Activated B cell treated with CpG ODN at 0.5 μM for 24 hours (primary cell): ENCODE measurements at regions of chr7 and their contacts with region 1.

Region 1: DNA sequence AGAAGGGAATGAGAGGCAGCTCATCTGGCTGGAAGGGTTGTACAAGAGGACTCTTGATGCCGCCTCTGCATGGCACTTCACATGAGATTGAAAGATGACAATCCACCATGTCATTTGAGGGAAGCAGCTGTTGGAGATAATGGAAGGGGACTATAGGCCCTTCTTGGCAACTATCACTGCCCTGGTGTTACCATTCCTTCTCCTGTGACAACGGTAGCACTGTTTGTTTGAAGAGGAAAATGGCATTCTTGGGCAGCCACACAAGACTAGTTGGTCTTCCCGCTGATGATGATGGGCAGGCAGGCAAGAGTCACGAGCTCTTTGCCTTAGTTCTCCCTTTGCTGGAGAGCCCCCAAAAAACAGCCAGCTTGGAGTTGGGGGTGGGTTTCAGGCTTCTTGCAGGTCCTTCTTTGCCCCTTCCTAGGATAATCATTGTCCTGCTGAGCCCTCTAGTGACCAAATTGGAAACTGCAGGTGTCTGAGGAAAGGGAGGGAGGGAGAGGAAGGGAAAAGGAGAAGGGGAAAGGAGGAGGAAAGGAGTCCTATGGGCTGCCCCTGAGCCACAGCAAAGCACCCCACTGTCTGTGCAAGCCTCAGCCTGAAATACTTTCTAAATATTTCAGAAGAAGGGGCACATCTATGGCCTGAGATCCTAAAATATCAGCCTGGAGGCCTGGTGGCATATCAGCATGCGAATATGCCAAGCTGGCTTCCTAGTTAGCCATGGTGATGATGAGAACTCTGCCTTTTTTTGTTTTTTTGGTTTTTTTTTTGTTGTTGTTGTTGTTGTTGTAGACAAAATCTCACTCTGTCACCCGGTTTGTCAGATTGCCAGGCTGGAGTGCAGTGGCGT is 165.6 kb upstream of the KMT2E start:
- DNase-seq: no peak
- ATAC-seq: peak; percentile 45
- H3K4me3 Mint-ChIP-seq: no peak overlapping the region
- H3K27ac Mint-ChIP-seq: no peak overlapping the region
- H3K4me1 Mint-ChIP-seq: no peaks in the 10 kb centered on the region
- H3K27me3 Mint-ChIP-seq: peaks cover 24% of the 10 kb centered on the region
- CTCF ChIP-seq: peak; percentile 33

Region 2: DNA sequence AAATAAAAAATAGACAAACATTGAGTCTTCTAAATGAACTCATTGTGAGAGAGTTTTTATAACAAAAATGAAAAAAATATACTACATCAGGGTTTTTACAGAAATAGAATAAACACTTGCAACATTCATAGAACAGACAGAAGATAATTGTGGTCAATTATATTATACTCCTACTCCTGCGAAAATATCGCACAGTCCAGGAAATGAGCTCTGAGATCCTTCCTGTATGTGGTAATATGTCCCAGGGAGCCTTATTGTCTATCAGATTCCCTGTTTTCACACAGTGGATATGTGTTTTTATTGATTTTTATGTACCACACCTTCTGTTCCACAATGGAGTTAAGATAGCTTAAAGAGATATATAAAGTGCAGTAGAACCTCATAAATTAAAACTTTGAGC is 831.4 kb before region 1 on chr7:
- CTCF ChIA-PET with region 1: no interaction called
- POLR2A ChIA-PET with region 1: no interaction called
- intact Hi-C with region 1: no loop called
- DNase-seq: no peak
- ATAC-seq: no peak
- H3K4me3 Mint-ChIP-seq: no peak overlapping the region
- H3K27ac Mint-ChIP-seq: no peak overlapping the region
- H3K4me1 Mint-ChIP-seq: no peaks in the 10 kb centered on the region
- H3K27me3 Mint-ChIP-seq: no peaks in the 10 kb centered on the region
- CTCF ChIP-seq: no peak

Region 3: DNA sequence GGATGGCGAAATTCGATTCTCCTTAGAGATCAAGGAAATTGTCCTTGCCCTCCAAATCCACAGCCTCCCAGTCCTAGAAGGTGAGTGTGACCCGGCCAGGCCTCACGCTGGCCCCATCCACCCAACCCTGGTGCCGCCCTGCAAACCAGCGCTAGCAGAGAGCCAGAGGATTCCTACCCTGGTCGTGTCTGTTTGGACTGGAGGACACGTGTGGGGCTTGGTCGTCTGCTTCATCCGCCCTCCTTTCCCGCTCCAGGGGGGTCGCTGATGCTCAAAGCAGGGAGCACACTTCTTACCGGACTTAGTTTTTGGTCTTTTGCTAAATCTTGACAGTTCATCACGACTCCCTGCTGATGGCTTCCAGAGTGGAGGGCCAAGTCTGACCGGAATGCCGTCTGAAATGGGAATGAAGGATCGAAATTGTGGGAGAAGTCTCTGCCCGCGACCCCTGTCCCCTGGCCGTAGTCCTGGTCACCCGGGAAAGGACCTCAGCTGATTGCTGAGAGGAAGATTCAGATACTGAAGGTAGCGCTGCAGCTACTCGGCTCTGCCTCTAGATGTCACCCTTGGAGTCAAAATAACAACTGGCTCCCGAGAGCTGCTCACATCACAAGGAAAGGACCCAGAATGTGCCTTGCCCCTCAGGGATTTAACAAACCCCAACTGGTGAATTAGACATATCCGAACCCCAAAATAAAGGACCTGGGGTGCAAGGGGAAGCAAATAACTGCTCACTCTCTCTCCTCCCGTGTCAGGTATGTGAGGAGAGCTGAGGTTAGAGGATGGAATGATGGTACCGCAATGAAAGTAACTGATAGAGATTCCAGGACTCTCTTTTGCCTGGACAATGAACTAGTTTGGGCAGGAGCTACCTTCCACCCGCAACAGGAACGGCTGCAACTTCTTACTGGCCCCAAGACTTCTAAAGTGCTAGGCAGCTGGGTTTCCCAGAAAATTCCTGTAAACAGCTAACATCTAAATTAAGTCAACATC is 617.0 kb before region 1 on chr7:
- CTCF ChIA-PET with region 1: interaction called, 34 read pairs
- POLR2A ChIA-PET with region 1: no interaction called
- intact Hi-C with region 1: loop called (anchors 1 kb)
- DNase-seq: peak; percentile 18
- ATAC-seq: peak; percentile 62
- H3K4me3 Mint-ChIP-seq: no peak overlapping the region
- H3K27ac Mint-ChIP-seq: no peak overlapping the region
- H3K4me1 Mint-ChIP-seq: peaks cover 2% of the 10 kb centered on the region
- H3K27me3 Mint-ChIP-seq: peaks cover 14% of the 10 kb centered on the region
- CTCF ChIP-seq: peak; percentile 67

Region 4: GRCh38 chr7:104341546-104341945 is 506.8 kb before region 1 on chr7:
- CTCF ChIA-PET with region 1: no interaction called
- POLR2A ChIA-PET with region 1: no interaction called
- intact Hi-C with region 1: loop called (anchors 10 kb)
- DNase-seq: no peak
- ATAC-seq: no peak
- H3K4me3 Mint-ChIP-seq: no peak overlapping the region
- H3K27ac Mint-ChIP-seq: no peak overlapping the region
- H3K4me1 Mint-ChIP-seq: no peaks in the 10 kb centered on the region
- H3K27me3 Mint-ChIP-seq: peaks cover 4% of the 10 kb centered on the region
- CTCF ChIP-seq: no peak

Region 5: DNA sequence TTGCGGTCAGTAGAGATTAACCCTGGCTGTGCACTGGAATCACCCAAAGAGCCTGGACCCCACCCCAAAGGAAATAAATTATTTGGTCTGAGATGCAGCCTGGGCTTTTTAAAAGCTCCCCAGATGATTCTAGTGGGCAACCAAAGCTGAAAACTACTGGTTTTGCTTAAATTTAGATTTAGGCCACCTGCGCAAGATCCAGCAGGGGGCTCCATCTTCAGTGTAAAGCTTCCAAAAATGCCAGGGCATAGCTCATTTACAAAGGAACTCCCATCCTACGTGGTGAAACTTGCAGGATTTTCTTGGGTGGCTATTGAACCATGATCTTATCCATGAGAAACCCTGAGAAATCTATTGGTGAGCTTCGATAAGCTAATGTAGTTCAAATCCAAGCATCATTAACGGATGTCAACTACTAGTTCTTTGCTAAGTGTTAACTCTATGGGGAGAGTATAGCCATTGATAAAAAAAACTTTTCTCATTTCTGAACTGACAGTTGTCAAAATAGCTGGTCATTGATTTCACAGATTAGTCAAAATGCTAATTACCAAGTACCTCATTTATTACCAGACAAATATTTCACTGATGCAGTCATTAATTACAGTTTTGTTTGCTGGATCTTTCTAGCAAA is 204.7 kb before region 1 on chr7:
- CTCF ChIA-PET with region 1: interaction called, 7 read pairs
- POLR2A ChIA-PET with region 1: no interaction called
- intact Hi-C with region 1: loop called (anchors 1 kb)
- DNase-seq: no peak
- ATAC-seq: no peak
- H3K4me3 Mint-ChIP-seq: no peak overlapping the region
- H3K27ac Mint-ChIP-seq: no peak overlapping the region
- H3K4me1 Mint-ChIP-seq: no peaks in the 10 kb centered on the region
- H3K27me3 Mint-ChIP-seq: peaks cover 13% of the 10 kb centered on the region
- CTCF ChIP-seq: no peak